ENCODE measurements at regions of chr5 and their contacts with region 1.

Region 1: GRCh38 chr5:127697894-127698600 is 5.1 kb upstream of the CCDC192 start:
- DNase-seq: no peak
- ATAC-seq: no peak
- H3K4me3 ChIP-seq: no peak overlapping the region
- H3K27ac ChIP-seq: peak overlapping the region in 3 of 4 donors; percentile 12 to 89 (median 87)
- H3K4me1 ChIP-seq: peaks cover 31 to 36% of the 10 kb centered on the region in 2 donors
- H3K27me3 ChIP-seq: no peaks in the 10 kb centered on the region
- CTCF ChIP-seq: no peak
- POLR2A ChIP-seq: no peak

Region 2: GRCh38 chr5:127386557-127386956 is 311.5 kb before region 1 on chr5:
- in situ Hi-C with region 1: no loop called
- intact Hi-C with region 1: no loop called
- DNase-seq: no peak
- ATAC-seq: no peak
- H3K4me3 ChIP-seq: no peak overlapping the region
- H3K27ac ChIP-seq: no peak overlapping the region
- H3K4me1 ChIP-seq: no peaks in the 10 kb centered on the region
- H3K27me3 ChIP-seq: no peaks in the 10 kb centered on the region
- CTCF ChIP-seq: no peak
- POLR2A ChIP-seq: no peak

Region 3: DNA sequence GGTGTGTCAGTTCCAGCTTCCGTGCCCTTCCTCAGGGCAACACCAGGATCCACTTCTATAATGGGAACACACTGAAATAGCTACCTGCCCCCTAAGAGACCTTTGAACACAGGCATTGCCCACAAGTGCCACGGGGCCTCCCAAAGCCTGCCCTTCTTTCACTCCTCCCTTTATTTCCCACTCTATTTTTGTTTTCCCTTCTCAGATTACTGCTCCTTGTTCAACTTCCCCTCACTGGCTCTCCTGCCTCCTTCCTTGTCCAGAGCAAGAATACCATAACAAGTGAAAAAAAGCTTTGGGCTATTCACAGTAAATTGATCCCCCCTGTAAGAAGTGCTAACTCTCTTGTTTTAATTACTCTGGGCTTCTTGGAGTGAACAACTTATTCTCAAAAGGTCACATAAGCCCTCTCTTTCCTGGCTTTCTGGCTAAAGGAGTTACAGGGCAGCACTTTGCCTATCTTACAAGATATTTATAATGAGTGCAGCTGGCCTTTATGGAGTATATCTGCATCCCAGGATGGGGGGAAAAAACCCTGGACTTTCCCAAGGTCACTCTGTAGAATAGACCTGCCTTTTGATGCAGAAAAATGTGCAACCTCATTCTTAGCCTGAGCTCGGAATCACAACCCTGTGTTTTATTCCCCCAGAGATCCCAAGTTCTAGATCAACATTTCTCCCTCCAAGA is 37.9 kb before region 1 on chr5:
- in situ Hi-C with region 1: no loop called
- intact Hi-C with region 1: loop called (anchors 5 kb)
- DNase-seq: peak; percentile 33 to 51
- ATAC-seq: peak; percentile 88 to 97
- H3K4me3 ChIP-seq: no peak overlapping the region
- H3K27ac ChIP-seq: peak overlapping the region; percentile 79 to 82 (median 80)
- H3K4me1 ChIP-seq: peaks cover 25 to 46% of the 10 kb centered on the region in 2 donors
- H3K27me3 ChIP-seq: no peaks in the 10 kb centered on the region
- CTCF ChIP-seq: no peak
- POLR2A ChIP-seq: peak in 1 of 2 donors; percentile 8